ENCODE measurements at regions of chr16 and their contacts with region 1.

Region 1: DNA sequence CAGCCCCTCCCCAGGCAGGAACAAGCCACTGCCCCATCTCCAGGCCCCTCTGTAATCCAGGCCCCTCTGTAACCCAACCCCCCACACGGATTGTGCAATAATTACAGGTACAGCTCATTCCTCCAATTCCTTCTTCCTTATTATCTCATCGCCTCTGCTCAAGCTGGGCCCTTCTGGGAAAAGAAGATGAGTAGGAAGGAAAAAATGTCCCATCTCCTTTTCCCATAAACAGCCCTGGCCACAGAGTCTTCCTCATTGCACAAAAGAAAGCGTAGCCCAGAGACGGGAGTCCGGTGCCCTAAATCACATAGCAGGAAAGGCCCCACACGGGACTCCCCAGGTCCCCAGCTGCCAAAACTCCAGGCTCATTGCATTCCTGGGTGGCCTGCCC is 3.6 kb upstream of the LITAFD start:
- DNase-seq: no peak
- ATAC-seq: no peak
- H3K4me3 ChIP-seq: no peak overlapping the region
- H3K27ac ChIP-seq: no peak overlapping the region
- H3K4me1 ChIP-seq: no peaks in the 10 kb centered on the region
- H3K27me3 ChIP-seq: no peaks in the 10 kb centered on the region

Region 2: DNA sequence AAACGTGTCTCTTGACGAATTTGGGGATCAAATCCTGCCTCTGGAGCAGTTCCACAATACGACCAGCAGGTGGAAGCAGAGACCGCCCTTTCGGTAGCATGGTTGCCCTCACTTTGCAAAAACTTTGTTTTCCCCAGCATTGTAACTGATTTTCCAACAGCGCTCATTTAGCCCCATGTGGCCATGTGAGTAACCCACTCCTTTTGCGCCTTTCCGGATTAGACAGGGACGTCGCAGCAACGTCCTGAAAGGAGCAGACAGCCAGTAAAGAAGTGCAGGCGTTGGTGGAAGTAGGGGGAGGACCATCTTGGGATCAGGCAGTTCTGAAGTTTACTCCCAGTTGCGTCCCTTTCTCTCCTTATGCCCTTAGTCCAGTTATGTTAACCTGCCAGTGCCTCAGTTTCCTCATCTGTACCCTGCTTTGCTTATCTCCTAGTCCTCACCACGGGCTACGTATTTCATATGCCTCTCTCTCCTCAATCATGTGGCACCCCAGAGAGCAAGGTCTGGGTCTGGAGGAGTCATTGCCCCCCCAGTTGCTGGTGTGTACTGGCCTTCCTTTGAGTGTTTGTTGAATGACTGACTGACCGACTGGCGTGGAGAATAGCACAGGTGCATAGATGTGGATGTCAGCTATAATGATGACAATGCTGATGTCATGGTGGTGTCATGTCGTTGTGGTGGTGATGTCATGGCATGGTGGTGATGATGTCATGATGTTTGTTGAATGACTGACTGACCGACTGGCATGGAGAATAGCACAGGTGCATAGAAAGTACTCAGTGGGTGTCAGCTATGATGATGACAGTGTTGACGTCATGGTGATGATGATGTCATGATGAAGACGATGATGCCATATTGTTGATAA is 310.5 kb before region 1 on chr16:
- intact Hi-C with region 1: loop called in 3 of 4 experiments (anchors 5 to 10 kb)
- DNase-seq: peak; percentile 64 to 80 (median 70)
- ATAC-seq: peak; percentile 86 to 87
- H3K4me3 ChIP-seq: no peak overlapping the region
- H3K27ac ChIP-seq: no peak overlapping the region
- H3K4me1 ChIP-seq: no peaks in the 10 kb centered on the region
- H3K27me3 ChIP-seq: no peaks in the 10 kb centered on the region

Region 3: GRCh38 chr16:8655184-8655717 is 223.3 kb before region 1 on chr16:
- intact Hi-C with region 1: loop called (anchors 2 to 10 kb)
- DNase-seq: no peak
- ATAC-seq: no peak
- H3K4me3 ChIP-seq: no peak overlapping the region
- H3K27ac ChIP-seq: no peak overlapping the region
- H3K4me1 ChIP-seq: no peaks in the 10 kb centered on the region
- H3K27me3 ChIP-seq: no peaks in the 10 kb centered on the region

Region 4: GRCh38 chr16:8660841-8661301 is 217.6 kb before region 1 on chr16:
- intact Hi-C with region 1: loop called (anchors 2 to 10 kb)
- DNase-seq: peak; percentile 57 to 90 (median 71)
- ATAC-seq: peak; percentile 86 to 87
- H3K4me3 ChIP-seq: no peak overlapping the region
- H3K27ac ChIP-seq: no peak overlapping the region
- H3K4me1 ChIP-seq: no peaks in the 10 kb centered on the region
- H3K27me3 ChIP-seq: no peaks in the 10 kb centered on the region

Region 5: GRCh38 chr16:8797364-8798173 is 80.9 kb before region 1 on chr16 and contains the starts of genes PMM2 and TMEM186:
- intact Hi-C with region 1: loop called in 1 of 4 experiments (anchors 5 kb)
- DNase-seq: peak; percentile 97 to 98 (median 98)
- ATAC-seq: peak; percentile 99
- H3K4me3 ChIP-seq: peak within 1 kb of the TSS; percentile 86
- H3K27ac ChIP-seq: peak within 1 kb of the TSS; percentile 65
- H3K4me1 ChIP-seq: peaks cover 10% of the 10 kb centered on the region
- H3K27me3 ChIP-seq: no peaks in the 10 kb centered on the region
- total RNA-seq, gene PMM2: 10.5 to 29.4 (median 13.0) TPM
- total RNA-seq, gene TMEM186: 12.2 to 12.8 (median 12.3) TPM

Region 6: GRCh38 chr16:9047686-9048301 is 169.3 kb after region 1 on chr16:
- intact Hi-C with region 1: no loop called
- DNase-seq: peak; percentile 91 to 93 (median 91)
- ATAC-seq: peak; percentile 99 to 100
- H3K4me3 ChIP-seq: no peak overlapping the region
- H3K27ac ChIP-seq: peak overlapping the region; percentile 98
- H3K4me1 ChIP-seq: peaks cover 7% of the 10 kb centered on the region
- H3K27me3 ChIP-seq: no peaks in the 10 kb centered on the region

Region 7: DNA sequence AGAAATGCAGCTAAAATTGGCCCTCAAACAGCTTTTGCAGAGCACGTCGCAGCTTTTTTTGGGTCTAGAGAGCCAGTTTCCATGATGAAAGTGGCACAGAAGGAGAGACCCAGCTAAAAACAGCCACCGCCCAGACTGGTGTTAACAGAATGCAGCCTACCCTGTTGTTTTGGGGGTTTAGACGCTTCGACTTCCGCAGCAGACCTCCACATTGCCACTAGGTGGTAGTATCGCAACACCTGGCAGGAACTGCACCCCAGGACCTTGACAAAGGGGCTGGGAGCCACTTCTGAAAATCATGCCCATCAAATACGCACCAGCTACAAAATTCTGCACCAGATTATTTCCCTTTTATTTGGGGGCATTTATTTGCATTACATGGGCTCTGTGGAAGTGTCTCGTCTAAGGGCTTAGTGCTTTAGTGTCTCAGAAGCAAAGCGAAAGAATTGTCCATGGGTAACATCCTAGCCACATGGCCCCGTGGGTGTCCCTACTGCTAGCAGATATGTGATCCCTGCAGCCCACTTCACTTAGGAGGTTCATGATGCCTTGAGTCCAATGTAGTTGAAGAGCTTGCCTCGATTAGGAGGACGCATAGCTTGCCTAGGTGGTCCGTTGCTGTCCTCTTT is 380.0 kb after region 1 on chr16:
- intact Hi-C with region 1: no loop called
- DNase-seq: peak in 1 of 3 donors; percentile 21
- ATAC-seq: peak; percentile 31 to 49
- H3K4me3 ChIP-seq: no peak overlapping the region
- H3K27ac ChIP-seq: no peak overlapping the region
- H3K4me1 ChIP-seq: no peaks in the 10 kb centered on the region
- H3K27me3 ChIP-seq: no peaks in the 10 kb centered on the region